Heart left ventricle (tissue), 16 donors: ENCODE measurements at regions of chr9 and their contacts with region 1.

Region 1: DNA sequence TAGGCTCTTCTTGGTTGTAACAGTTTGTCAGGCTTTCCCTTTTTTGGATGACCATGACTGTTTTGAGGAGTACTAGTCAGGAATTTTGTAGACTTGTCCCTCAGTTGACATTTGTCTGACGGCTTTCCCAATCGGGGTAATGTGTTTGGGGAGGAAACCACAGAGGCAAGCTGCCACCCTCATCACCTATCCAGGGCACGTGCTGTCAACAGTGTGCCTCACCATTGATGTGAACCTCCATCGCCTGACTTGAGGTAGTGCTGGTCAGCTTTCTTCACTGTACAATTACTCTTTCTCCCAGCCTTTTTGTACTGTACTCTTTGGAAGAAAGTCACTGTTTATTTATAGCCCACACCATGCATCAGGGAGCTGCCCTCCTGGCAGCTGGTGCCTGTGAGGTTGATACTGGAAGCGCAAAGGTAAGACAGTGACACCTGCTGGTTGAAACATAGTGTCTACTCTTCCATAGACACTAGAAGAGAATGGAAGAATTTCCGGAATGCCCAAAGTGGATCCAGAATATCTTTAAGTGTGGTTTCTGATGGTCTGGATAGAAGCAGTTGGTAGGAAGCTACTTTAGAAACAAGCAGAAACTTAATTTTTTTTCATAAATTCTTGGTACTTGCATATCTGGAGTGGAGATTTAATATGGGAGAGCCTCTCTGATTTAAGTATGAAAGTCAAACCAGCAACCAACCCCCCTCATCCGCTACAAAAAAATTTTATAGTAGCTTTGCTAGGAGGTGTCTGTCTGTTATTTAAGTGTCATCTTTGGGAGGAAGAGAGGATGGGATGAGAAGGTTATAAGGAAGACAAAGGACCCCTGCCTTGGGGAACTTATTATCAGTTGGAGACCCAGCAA is 69.3 kb downstream of the SNX30 start:
- DNase-seq: peak in 4 of 5 donors; percentile 54 to 75 (median 63)
- ATAC-seq: peak; percentile 89 to 98 (median 98)
- H3K4me3 ChIP-seq: no peak overlapping the region
- H3K27ac ChIP-seq: peak overlapping the region in 2 of 12 donors; percentile 16 to 20
- H3K4me1 ChIP-seq: peaks cover 0 to 24% (median 7%) of the 10 kb centered on the region in 12 donors
- H3K27me3 ChIP-seq: no peaks in the 10 kb centered on the region
- CTCF ChIP-seq: peak; percentile 54 to 80 (median 66)
- POLR2A ChIP-seq: no peak

Region 2: DNA sequence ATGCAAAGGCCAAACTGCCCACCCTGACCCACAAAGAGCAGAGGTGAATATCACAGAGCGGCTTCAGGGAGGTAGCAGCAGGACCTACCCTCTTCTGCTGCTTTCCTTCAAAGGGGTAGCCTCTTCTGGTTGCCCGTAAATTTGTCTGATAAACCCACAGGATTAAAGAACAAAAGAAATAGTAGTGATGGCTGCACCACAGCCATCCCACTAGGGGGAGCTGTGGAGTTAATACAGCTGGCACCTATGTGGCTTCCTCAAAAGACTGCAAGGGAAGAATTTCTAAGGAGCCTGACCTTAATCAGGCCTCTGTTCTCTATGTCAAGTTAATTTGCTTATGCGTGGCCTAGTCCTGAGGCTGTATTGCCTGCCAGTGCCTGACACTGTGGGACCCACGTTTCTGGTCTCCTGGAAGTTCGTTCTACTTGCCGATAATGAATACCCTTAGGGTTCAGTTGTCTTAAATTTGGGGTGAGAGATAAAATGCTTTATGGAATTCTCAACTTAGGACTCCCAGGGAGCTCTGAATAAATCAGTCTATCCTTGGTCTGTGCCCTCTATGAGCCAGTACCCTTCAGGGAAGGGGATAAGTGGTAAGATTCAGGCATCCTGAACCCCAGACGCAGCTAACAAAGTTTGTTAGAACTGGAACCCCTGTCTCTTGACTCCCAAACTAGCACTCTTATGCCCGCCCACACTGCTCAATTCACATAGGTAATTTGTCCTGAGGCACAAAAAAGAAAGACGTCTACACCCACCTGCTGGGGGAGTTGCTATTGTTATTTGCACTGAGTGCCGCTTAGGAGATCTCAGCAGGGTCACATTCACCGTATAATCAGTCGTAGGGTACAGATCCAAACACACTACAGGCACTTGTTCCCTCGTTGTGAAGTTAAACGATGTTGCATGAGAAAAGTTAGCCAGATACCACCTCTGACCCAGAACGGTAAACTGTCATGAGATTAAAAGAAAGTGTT is 721.9 kb before region 1 on chr9:
- intact Hi-C with region 1: loop called in 2 of 10 experiments (anchors 10 kb)
- DNase-seq: peak in 4 of 5 donors; percentile 47 to 68 (median 54)
- ATAC-seq: peak; percentile 42 to 86 (median 82)
- H3K4me3 ChIP-seq: no peak overlapping the region
- H3K27ac ChIP-seq: no peak overlapping the region
- H3K4me1 ChIP-seq: peaks cover 0 to 53% (median 0%) of the 10 kb centered on the region in 12 donors
- H3K27me3 ChIP-seq: no peaks in the 10 kb centered on the region
- CTCF ChIP-seq: peak; percentile 79 to 95 (median 90)
- POLR2A ChIP-seq: no peak

Region 3: DNA sequence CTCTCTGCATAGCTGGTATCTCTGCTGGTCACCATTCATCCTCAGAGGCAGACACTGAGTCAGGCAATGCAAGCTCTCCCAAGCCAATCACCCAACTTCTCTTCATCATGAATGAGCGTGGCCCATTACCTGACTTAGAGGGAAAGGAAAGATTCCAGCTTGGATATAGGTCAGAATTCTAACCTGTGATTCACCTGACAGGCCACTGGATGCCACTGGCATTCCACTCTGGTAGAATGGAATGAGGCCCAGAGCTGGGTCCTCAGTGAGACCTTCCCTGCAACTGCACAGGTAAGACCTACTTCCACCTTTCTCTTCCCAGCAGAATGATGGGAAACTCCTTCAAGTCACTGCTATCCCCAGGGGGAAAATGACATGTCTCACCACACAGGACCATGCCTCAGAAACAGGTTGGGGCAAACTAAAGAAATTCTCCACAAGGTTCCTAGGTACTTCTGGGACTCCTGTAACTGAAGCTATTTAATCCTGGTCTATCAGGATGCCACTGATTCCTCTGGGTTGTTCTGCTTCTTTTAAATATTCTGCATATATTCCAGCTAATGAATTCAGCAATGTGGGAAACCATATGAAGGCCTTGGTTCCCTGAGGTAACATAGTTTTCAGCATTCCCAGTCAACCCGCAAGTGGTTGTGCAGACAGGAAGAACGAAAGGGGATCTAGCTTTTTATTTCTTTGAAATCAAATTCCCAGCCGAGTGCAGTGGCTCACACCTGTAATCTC is 706.8 kb before region 1 on chr9:
- intact Hi-C with region 1: loop called in 1 of 10 experiments (anchors 10 kb)
- DNase-seq: no peak
- ATAC-seq: peak in 1 of 4 donors; percentile 38
- H3K4me3 ChIP-seq: no peak overlapping the region
- H3K27ac ChIP-seq: no peak overlapping the region
- H3K4me1 ChIP-seq: peaks cover 0 to 14% (median 0%) of the 10 kb centered on the region in 12 donors
- H3K27me3 ChIP-seq: no peaks in the 10 kb centered on the region
- CTCF ChIP-seq: peak in 8 of 12 donors; percentile 11 to 46 (median 31)
- POLR2A ChIP-seq: no peak

Region 4: GRCh38 chr9:112750111-112750767 is 69.6 kb before region 1 on chr9 and contains the start of gene SNX30:
- intact Hi-C with region 1: loop called in 2 of 10 experiments (anchors 2 to 10 kb)
- DNase-seq: peak; percentile 91 to 94 (median 92)
- ATAC-seq: peak; percentile 95 to 97 (median 96)
- H3K4me3 ChIP-seq: peak within 1 kb of the TSS; percentile 77 to 99 (median 96)
- H3K27ac ChIP-seq: peak within 1 kb of the TSS; percentile 60 to 95 (median 80)
- H3K4me1 ChIP-seq: peaks cover 0 to 61% (median 24%) of the 10 kb centered on the region in 12 donors
- H3K27me3 ChIP-seq: no peaks in the 10 kb centered on the region
- CTCF ChIP-seq: peak in 3 of 12 donors; percentile 19 to 34 (median 33)
- POLR2A ChIP-seq: peak in 1 of 2 donors; percentile 83
- total RNA-seq, gene SNX30: 3.2 to 10.3 (median 4.1) TPM